ENCODE measurements at regions of chr10 and their contacts with region 1.

Region 1: GRCh38 chr10:71708301-71708703 is 11.3 kb downstream of the C10orf105 start:
- DNase-seq: no peak
- ATAC-seq: peak; percentile 88
- H3K4me3 ChIP-seq: no peak overlapping the region
- H3K27ac ChIP-seq: no peak overlapping the region
- H3K4me1 ChIP-seq: peaks cover 8% of the 10 kb centered on the region
- H3K27me3 ChIP-seq: no peaks in the 10 kb centered on the region; a peak in 1 of 4 replicates
- CTCF ChIP-seq: peak; percentile 82 to 97 (median 93)
- EP300 ChIP-seq: no peak
- POLR2A ChIP-seq: no peak
- RAD21 ChIP-seq: peak; percentile 89

Region 2: DNA sequence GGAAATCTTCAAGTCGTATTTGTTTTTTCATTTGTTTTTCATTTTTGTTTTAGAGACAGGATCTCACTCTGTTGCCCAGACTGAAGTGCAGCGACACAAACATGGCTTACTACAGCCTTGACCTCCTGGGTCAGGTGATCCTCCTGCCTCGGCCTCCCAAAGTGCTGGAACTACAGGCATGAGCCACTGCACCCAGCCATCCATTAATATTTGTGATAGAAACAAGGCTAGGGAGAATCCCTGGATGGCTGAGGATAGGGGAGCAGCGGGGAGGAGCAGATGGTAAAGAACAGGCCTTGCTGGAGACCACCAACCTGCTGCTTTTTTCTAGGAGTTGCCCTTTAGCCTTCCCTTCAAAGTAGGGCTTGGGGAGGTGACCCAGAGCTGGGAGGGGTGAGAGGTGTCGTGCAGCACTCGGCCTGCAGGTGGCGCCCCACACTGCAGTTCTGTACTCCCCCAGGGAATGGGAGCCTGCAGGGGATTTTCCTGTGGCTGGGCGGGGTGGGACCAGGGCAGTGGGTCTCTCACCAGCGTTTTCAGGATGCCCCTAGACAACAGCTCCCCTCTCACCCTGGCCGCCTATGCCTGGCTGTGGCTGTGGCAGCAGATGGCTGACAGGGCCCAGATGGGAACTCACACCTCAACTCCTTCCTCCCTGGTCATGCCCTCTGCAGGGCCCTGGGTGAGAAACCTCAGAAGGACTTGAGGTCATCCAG is 324.2 kb before region 1 on chr10:
- CTCF ChIA-PET with region 1: interaction called, 43 read pairs
- POLR2A ChIA-PET with region 1: no interaction called
- RAD21 ChIA-PET with region 1: interaction called, 13 read pairs
- SMC1A ChIA-PET with region 1: interaction called, 11 read pairs
- in situ Hi-C with region 1: loop called (anchors 10 kb)
- intact Hi-C with region 1: no loop called
- DNase-seq: no peak
- ATAC-seq: peak; percentile 98
- H3K4me3 ChIP-seq: no peak overlapping the region
- H3K27ac ChIP-seq: no peak overlapping the region
- H3K4me1 ChIP-seq: no peaks in the 10 kb centered on the region
- H3K27me3 ChIP-seq: peaks cover 0 to 3% of the 10 kb centered on the region in 2 experiments; a peak in 1 of 4 replicates
- CTCF ChIP-seq: peak; percentile 95 to 97 (median 95)
- EP300 ChIP-seq: no peak
- POLR2A ChIP-seq: no peak
- RAD21 ChIP-seq: peak; percentile 86

Region 3: GRCh38 chr10:71569775-71570588 is 138.3 kb before region 1 on chr10:
- CTCF ChIA-PET with region 1: interaction called, 21 read pairs
- POLR2A ChIA-PET with region 1: no interaction called
- RAD21 ChIA-PET with region 1: interaction called, 26 read pairs
- SMC1A ChIA-PET with region 1: interaction called, 7 read pairs
- in situ Hi-C with region 1: no loop called
- intact Hi-C with region 1: loop called (anchors 2 kb)
- DNase-seq: no peak
- ATAC-seq: peak; percentile 86
- H3K4me3 ChIP-seq: no peak overlapping the region
- H3K27ac ChIP-seq: no peak overlapping the region
- H3K4me1 ChIP-seq: no peaks in the 10 kb centered on the region
- H3K27me3 ChIP-seq: peaks cover 0 to 7% of the 10 kb centered on the region in 2 experiments; a peak in 2 of 4 replicates
- CTCF ChIP-seq: peak; percentile 76 to 84 (median 79)
- EP300 ChIP-seq: no peak
- POLR2A ChIP-seq: no peak
- RAD21 ChIP-seq: peak; percentile 73

Region 4: GRCh38 chr10:71666639-71667386 is 41.5 kb before region 1 on chr10:
- CTCF ChIA-PET with region 1: interaction called, 38 read pairs
- POLR2A ChIA-PET with region 1: interaction called, 4 read pairs
- RAD21 ChIA-PET with region 1: interaction called, 3 read pairs
- SMC1A ChIA-PET with region 1: interaction called, 6 read pairs
- in situ Hi-C with region 1: no loop called
- intact Hi-C with region 1: no loop called
- DNase-seq: peak; percentile 5
- ATAC-seq: peak; percentile 57
- H3K4me3 ChIP-seq: no peak overlapping the region
- H3K27ac ChIP-seq: no peak overlapping the region
- H3K4me1 ChIP-seq: peaks cover 17% of the 10 kb centered on the region
- H3K27me3 ChIP-seq: no peaks in the 10 kb centered on the region; a peak in 1 of 4 replicates
- CTCF ChIP-seq: no peak
- EP300 ChIP-seq: 0 out of 4 replicates have a peak, but pooled peaks of 1 of the 2 experiments have one; percentile 26
- POLR2A ChIP-seq: no peak
- RAD21 ChIP-seq: no peak

Region 5: GRCh38 chr10:71771821-71772617 is 63.7 kb after region 1 on chr10:
- CTCF ChIA-PET with region 1: interaction called, 34 read pairs
- POLR2A ChIA-PET with region 1: interaction called, 3 read pairs
- RAD21 ChIA-PET with region 1: interaction called, 13 read pairs
- SMC1A ChIA-PET with region 1: interaction called, 10 read pairs
- in situ Hi-C with region 1: no loop called
- intact Hi-C with region 1: no loop called
- DNase-seq: no peak
- ATAC-seq: no peak
- H3K4me3 ChIP-seq: peak overlapping the region; percentile 76; the same call in 1 of the 2 replicates
- H3K27ac ChIP-seq: peak overlapping the region; percentile 14; the same call in 1 of the 2 replicates
- H3K4me1 ChIP-seq: peaks cover 70% of the 10 kb centered on the region
- H3K27me3 ChIP-seq: no peaks in the 10 kb centered on the region
- CTCF ChIP-seq: no peak
- EP300 ChIP-seq: no peak
- POLR2A ChIP-seq: no peak
- RAD21 ChIP-seq: no peak

Measured in GM12878 (cell line).